Adrenal gland (tissue), 19 donors: ENCODE measurements at regions of chr2 and their contacts with region 1.

Region 1: GRCh38 chr2:96554293-96555145 is 18.0 kb downstream of the ARID5A start:
- DNase-seq: peak in 6 of 7 donors; percentile 59 to 76 (median 72)
- H3K4me3 ChIP-seq: no peak overlapping the region
- H3K27ac ChIP-seq: no peak overlapping the region
- H3K4me1 ChIP-seq: peaks cover 0 to 5% of the 10 kb centered on the region in 2 donors
- H3K27me3 ChIP-seq: no peaks in the 10 kb centered on the region
- CTCF ChIP-seq: peak; percentile 79 to 97 (median 87)
- POLR2A ChIP-seq: no peak

Region 2: DNA sequence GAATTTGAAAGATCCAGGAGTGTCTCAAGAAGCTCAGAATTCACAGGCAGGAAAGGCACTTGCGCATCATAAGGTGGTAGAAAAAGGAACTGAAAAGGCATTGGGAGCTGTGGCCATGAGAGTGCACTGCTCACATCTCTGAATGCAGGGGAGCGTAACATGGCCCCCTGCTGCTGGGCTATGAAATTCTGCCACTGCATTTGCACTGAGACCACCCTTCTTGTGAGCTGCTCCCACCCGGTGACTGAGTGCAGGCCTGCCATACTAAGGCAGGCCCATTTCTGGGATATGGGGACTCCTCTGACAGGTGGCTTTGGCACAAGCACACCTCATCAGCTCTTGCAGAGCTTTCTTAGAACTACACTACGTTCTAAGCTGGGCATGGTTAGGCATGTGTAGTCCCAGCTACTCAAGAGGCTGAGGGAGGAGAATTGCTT is 320.6 kb before region 1 on chr2:
- intact Hi-C with region 1: no loop called
- DNase-seq: no peak
- H3K4me3 ChIP-seq: no peak overlapping the region
- H3K27ac ChIP-seq: no peak overlapping the region
- H3K4me1 ChIP-seq: no peaks in the 10 kb centered on the region
- H3K27me3 ChIP-seq: no peaks in the 10 kb centered on the region
- CTCF ChIP-seq: no peak
- POLR2A ChIP-seq: no peak

Region 3: DNA sequence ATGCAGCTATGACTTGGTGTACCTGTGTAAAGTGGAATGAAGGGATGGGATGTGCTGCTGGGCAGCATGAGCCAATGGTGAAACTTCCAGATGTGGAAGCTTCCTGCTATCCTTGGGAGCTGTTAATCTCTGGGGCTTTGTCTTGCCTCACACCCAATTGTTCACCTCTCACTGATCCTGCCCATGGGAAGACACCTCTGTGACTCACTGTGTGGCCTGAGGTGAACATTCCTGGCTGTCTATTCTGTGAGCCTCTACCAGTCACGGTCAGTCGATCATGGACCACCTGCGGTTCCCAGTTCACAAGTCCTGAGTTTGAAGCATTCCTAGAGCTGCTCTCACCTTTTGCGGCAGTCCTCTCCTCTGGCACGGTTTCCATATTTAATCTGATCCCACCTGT is 61.4 kb before region 1 on chr2:
- intact Hi-C with region 1: no loop called
- DNase-seq: no peak
- H3K4me3 ChIP-seq: no peak overlapping the region
- H3K27ac ChIP-seq: no peak overlapping the region
- H3K4me1 ChIP-seq: peaks cover 0 to 5% of the 10 kb centered on the region in 2 donors
- H3K27me3 ChIP-seq: no peaks in the 10 kb centered on the region
- CTCF ChIP-seq: no peak
- POLR2A ChIP-seq: no peak

Region 4: GRCh38 chr2:96951093-96951654 is 396.7 kb after region 1 on chr2:
- intact Hi-C with region 1: loop called in 1 of 2 experiments (anchors 10 kb)
- DNase-seq: peak; percentile 49 to 84 (median 72)
- H3K4me3 ChIP-seq: no peak overlapping the region
- H3K27ac ChIP-seq: no peak overlapping the region
- H3K4me1 ChIP-seq: peaks cover 0 to 27% of the 10 kb centered on the region in 2 donors
- H3K27me3 ChIP-seq: no peaks in the 10 kb centered on the region
- CTCF ChIP-seq: peak; percentile 83 to 94 (median 88)
- POLR2A ChIP-seq: no peak